ENCODE measurements at regions of chr6 and their contacts with region 1.

Region 1: DNA sequence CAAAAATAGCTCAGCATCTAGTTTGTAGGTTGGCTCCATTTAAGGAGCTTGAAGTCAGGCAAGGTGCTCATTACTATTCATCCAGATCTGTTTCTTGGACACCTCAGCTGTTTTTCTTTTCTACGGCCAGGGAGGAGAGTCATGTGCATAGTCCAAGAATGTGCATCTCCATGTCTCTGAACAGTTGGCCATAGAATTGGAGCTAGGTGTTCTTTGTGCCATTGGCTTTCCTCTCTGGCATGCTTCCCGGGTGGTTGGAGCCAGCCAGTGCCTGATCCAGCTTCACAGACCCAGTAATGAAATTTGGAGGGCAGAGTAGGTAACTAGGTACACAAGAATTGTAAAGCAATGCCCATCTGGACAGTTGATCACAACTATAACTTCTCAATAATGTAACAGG is 21.6 kb downstream of the EYA4 start:
- DNase-seq: no peak
- H3K4me3 ChIP-seq: no peak overlapping the region
- H3K27ac ChIP-seq: no peak overlapping the region
- H3K4me1 ChIP-seq: peaks cover 13% of the 10 kb centered on the region
- H3K27me3 ChIP-seq: no peaks in the 10 kb centered on the region
- CTCF ChIP-seq: no peak

Region 2: DNA sequence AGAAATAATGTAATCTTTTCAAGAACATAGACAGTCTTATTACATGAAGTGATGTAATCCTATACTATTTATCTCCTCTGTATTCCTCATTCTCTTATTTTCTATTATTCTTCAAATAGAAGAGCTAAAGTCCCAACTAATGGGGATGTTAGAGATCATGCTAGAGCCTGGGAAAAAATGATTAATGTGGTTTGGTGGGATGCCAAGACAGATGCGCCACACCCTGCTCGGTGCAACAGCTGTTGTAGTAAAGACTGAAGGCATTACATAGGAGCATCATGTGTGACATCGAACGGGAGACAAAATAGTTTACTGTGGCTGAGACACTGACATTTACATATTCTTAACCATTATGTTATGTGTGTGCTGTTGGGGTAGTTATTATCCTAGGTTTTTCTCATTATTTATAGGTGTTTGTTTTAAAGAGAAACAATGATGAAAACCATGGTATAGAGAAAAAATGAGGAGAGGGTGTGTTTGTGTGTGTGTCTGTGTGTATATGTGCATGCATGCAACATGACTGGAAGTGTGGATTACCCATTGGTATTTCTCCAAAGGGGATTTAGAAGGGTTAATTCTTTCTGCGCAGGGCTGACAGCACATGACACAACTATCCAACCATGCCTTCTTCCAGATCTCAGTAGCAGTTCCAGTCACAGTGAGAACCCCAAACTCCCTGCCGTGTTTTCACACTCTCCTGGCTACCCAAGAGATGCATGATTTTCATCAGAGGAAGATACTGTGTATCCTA is 133.6 kb after region 1 on chr6:
- CTCF ChIA-PET with region 1: no interaction called
- POLR2A ChIA-PET with region 1: no interaction called
- intact Hi-C with region 1: no loop called
- DNase-seq: no peak
- H3K4me3 ChIP-seq: no peak overlapping the region
- H3K27ac ChIP-seq: no peak overlapping the region
- H3K4me1 ChIP-seq: no peaks in the 10 kb centered on the region
- H3K27me3 ChIP-seq: no peaks in the 10 kb centered on the region
- CTCF ChIP-seq: no peak

Region 3: DNA sequence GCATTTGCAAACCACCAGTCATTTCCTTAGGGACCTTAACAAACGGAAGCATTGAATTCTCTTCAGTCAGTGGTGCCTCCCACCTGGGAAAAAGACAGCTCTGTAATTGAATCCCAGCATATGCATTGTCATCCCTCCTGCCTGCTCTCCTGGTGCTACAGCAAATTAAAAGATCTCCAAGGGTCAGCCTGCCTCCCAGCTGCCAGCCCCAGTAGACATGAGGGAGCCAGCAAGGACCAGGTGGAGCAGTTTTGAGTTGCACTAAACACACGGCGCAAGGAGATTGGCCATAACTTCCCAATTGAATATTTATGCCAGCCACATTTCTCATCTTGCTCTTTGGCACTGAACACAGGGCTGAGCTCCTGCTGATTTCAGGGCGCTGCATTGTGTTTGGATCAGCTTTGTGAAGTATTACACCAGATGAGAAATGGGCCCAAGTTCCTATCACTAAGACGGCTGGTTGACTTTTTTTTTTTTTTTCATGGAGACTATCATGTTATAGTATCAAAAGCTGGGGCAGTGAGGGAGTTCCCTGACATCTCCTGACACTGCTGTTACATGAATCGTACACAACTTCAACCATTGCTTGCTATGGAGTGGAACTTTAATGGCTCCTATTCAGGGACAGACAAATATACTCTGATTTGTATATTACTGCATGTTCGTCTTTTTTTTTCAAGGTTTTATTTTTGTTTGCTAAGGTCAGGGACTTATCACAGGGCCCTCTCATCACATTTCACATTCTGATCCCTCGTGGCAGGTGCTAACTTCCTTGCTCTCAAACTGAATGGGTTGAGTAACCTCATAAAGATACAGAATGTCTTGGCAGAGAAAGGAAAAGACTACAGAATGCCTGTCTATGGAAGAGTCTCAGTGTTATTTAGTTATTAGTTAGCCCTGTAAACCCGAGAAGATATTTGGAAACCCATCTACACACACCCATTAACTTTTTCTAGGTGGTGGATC is 169.5 kb after region 1 on chr6:
- CTCF ChIA-PET with region 1: no interaction called
- POLR2A ChIA-PET with region 1: no interaction called
- intact Hi-C with region 1: loop called (anchors 1 kb)
- DNase-seq: no peak
- H3K4me3 ChIP-seq: no peak overlapping the region
- H3K27ac ChIP-seq: no peak overlapping the region
- H3K4me1 ChIP-seq: no peaks in the 10 kb centered on the region
- H3K27me3 ChIP-seq: no peaks in the 10 kb centered on the region
- CTCF ChIP-seq: no peak

Region 4: GRCh38 chr6:133553652-133554051 is 290.8 kb after region 1 on chr6:
- CTCF ChIA-PET with region 1: interaction called, 15 read pairs
- POLR2A ChIA-PET with region 1: no interaction called
- intact Hi-C with region 1: no loop called
- DNase-seq: peak in 1 of 2 experiments; percentile 38
- H3K4me3 ChIP-seq: no peak overlapping the region
- H3K27ac ChIP-seq: no peak overlapping the region
- H3K4me1 ChIP-seq: no peaks in the 10 kb centered on the region
- H3K27me3 ChIP-seq: no peaks in the 10 kb centered on the region
- CTCF ChIP-seq: peak; percentile 89